GM12878 (cell line): ENCODE measurements at regions of chr15 and their contacts with region 1.

Region 1: DNA sequence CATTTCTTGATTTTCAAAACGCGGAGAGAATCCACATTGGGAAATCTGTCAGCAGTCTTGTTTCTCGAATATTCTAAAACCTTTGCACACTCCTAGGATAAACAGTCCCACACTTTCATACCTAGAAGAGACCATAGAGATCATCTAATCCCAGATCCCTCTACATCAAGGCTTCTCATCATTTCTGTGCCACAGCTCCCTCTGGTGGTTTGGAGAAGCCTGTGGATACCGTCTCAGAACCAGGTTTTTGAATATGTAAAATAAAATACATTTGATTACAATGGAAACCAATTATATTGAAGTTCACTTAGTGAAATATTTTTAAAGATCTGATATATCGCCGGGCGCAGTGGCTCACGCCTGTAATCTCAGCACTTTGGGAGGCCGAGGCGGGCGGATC is 211.9 kb upstream of the GOLGA6L4 start:
- DNase-seq: no peak
- ATAC-seq: peak; percentile 79
- H3K4me3 ChIP-seq: no peak overlapping the region
- H3K27ac ChIP-seq: no peak overlapping the region
- H3K4me1 ChIP-seq: no peaks in the 10 kb centered on the region
- H3K27me3 ChIP-seq: no peaks in the 10 kb centered on the region
- CTCF ChIP-seq: peak; percentile 59 to 62 (median 60)
- EP300 ChIP-seq: no peak
- POLR2A ChIP-seq: no peak
- RAD21 ChIP-seq: peak; percentile 77

Region 2: DNA sequence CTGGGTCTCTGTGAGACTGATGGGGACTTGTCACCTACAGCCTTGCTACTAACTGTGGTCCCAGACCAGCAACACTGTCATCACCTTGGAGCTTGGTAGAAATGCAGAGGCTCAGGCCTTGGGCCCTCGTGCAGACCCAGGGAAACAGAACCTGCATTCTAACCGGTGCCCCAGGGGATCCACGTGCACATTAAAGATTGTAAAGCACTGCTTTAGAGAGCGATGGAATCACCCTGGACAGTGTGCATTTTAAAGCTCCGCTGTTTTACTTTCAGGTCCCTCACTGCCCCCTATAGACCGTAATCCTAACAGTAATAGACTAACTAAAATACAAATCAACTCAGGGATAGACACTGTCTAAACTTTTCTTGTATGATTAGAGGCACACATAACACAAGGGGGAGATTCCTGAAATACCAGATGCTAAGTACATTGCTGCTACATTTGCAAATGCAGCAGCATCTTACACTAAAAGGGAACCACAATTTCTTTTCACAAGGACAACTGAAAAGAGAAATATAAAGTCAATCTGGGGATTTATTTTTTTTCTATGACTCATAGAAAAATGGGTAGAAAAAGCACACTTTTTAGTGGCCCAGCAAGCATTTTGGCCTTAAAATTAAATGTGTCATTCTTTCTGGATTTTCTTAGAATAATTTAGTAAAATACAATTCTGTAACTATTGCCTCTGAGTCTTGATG is 587.0 kb before region 1 on chr15:
- CTCF ChIA-PET with region 1: interaction called, 4 read pairs
- POLR2A ChIA-PET with region 1: no interaction called
- RAD21 ChIA-PET with region 1: no interaction called
- SMC1A ChIA-PET with region 1: no interaction called
- in situ Hi-C with region 1: loop called (anchors 10 kb)
- intact Hi-C with region 1: no loop called
- DNase-seq: no peak
- ATAC-seq: peak; percentile 70
- H3K4me3 ChIP-seq: no peak overlapping the region
- H3K27ac ChIP-seq: no peak overlapping the region
- H3K4me1 ChIP-seq: no peaks in the 10 kb centered on the region
- H3K27me3 ChIP-seq: peaks cover 0 to 2% of the 10 kb centered on the region in 2 experiments; a peak in 1 of 4 replicates
- CTCF ChIP-seq: peak in 2 of 3 experiments; percentile 16 to 32; a peak in 1 of 6 replicates
- EP300 ChIP-seq: no peak
- POLR2A ChIP-seq: no peak
- RAD21 ChIP-seq: no peak

Region 3: DNA sequence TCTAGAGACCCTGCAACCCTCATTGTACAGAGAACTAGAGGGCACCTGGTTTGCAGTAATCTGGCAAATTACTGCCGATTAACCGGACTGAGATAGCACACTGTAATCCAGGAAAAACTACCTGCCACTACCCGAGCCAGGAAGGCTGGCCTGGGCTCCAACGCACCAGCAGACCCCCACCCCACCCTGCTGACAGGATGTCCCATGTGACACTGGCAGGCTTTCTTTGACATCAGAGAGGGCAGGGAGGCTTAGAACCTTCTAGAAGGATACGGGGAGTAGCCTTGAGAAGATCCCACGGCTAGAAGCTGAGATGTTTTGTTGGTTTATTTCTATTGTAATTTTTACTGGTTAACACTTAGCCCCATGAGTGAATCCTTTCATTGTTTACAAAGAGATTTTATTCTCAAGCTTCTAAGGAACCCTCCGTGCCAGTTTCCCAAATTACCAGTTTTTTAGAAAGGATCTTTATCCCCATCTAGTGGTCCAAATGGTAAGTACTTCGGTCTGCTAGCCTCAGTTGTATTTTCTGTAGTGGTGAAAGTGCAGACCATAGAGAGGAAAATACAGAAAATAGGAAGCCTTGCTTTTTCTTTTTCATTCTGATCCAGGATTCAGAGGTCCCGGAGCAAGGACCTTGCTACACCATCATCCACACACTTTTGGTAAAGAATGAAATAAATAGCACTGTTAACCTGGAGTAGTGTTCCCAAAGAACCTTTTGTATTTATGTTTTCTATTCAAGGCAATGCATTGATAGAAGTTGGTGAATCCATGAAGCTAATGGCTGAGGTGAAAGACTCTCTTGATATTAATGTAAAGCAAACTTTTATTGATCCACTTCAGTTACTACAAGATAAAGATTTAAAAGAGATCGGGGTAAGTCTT is 451.6 kb before region 1 on chr15:
- CTCF ChIA-PET with region 1: interaction called, 5 read pairs
- POLR2A ChIA-PET with region 1: no interaction called
- RAD21 ChIA-PET with region 1: no interaction called
- SMC1A ChIA-PET with region 1: no interaction called
- in situ Hi-C with region 1: no loop called
- intact Hi-C with region 1: loop called (anchors 5 kb)
- DNase-seq: no peak
- ATAC-seq: 0 out of 3 replicates have a peak, but pooled peaks have one; percentile 29
- H3K4me3 ChIP-seq: no peak overlapping the region
- H3K27ac ChIP-seq: no peak overlapping the region
- H3K4me1 ChIP-seq: no peaks in the 10 kb centered on the region; the same call in 1 of the 2 replicates
- H3K27me3 ChIP-seq: no peaks in the 10 kb centered on the region; a peak in 1 of 4 replicates
- CTCF ChIP-seq: peak; percentile 40 to 62 (median 50); a peak in 4 of 6 replicates
- EP300 ChIP-seq: no peak
- POLR2A ChIP-seq: no peak
- RAD21 ChIP-seq: peak; percentile 48

Region 4: GRCh38 chr15:83657549-83657948 is 366.1 kb before region 1 on chr15:
- CTCF ChIA-PET with region 1: interaction called, 10 read pairs
- POLR2A ChIA-PET with region 1: no interaction called
- RAD21 ChIA-PET with region 1: no interaction called
- SMC1A ChIA-PET with region 1: interaction called, 4 read pairs
- in situ Hi-C with region 1: no loop called
- intact Hi-C with region 1: no loop called
- DNase-seq: no peak
- ATAC-seq: no peak
- H3K4me3 ChIP-seq: no peak overlapping the region
- H3K27ac ChIP-seq: no peak overlapping the region
- H3K4me1 ChIP-seq: no peaks in the 10 kb centered on the region
- H3K27me3 ChIP-seq: peaks cover 6 to 7% of the 10 kb centered on the region in 2 experiments; a peak in 3 of 4 replicates
- CTCF ChIP-seq: peak in 2 of 3 experiments; percentile 8 to 38; a peak in 2 of 6 replicates
- EP300 ChIP-seq: no peak
- POLR2A ChIP-seq: no peak
- RAD21 ChIP-seq: 0 out of 2 replicates have a peak, but pooled peaks have one; percentile 30

Region 5: DNA sequence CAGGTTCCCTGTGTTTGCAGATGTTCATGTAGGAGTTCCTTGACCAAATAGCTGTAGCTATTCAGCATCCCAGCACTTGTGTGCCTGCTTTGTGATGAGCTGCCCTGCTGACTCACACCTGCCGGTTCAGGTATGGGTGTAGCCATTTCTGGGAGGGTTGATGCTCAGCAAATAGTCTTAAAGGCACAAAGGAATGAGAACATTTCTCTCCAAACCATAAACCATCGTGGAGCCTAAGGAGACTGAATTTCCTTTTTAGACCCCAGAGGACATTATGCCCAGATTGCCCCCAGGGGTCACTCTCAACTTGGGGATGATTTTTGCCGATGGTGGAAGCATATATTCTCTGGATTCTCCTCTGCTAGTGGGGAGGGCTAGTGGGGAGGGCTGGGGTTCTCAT is 289.1 kb before region 1 on chr15:
- CTCF ChIA-PET with region 1: interaction called, 7 read pairs
- POLR2A ChIA-PET with region 1: no interaction called
- RAD21 ChIA-PET with region 1: interaction called, 3 read pairs
- SMC1A ChIA-PET with region 1: interaction called, 18 read pairs
- in situ Hi-C with region 1: loop called (anchors 5 kb)
- intact Hi-C with region 1: loop called (anchors 2 kb)
- DNase-seq: no peak
- ATAC-seq: peak; percentile 56; the same call in 2 of the 3 replicates
- H3K4me3 ChIP-seq: no peak overlapping the region
- H3K27ac ChIP-seq: no peak overlapping the region
- H3K4me1 ChIP-seq: no peaks in the 10 kb centered on the region
- H3K27me3 ChIP-seq: no peaks in the 10 kb centered on the region
- CTCF ChIP-seq: peak; percentile 34 to 53 (median 49); a peak in 5 of 6 replicates
- EP300 ChIP-seq: no peak
- POLR2A ChIP-seq: no peak
- RAD21 ChIP-seq: peak; percentile 94

Region 6: DNA sequence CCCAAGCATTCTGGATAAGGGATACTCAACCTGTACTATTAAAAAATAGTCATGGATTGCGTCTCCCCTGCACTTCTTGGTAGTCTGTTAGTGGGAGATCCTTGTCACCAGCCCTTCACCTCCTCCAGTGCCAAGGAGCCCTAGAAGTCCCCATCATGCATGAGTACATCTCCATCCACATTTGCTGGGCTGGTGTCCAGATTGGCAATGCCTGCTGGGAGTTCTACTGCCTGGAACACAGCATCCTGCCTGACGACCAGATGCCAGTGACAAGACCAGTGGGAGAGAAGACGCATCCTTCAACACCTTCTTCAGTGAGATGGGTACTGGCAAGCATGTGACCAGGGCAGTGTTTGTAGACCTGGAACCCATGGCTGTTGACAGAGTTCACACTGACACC is 284.0 kb before region 1 on chr15:
- CTCF ChIA-PET with region 1: interaction called, 7 read pairs
- POLR2A ChIA-PET with region 1: no interaction called
- RAD21 ChIA-PET with region 1: interaction called, 3 read pairs
- SMC1A ChIA-PET with region 1: interaction called, 18 read pairs
- in situ Hi-C with region 1: loop called (anchors 5 kb)
- intact Hi-C with region 1: loop called (anchors 2 kb)
- DNase-seq: no peak
- ATAC-seq: no peak
- H3K4me3 ChIP-seq: no peak overlapping the region
- H3K27ac ChIP-seq: no peak overlapping the region
- H3K4me1 ChIP-seq: no peaks in the 10 kb centered on the region
- H3K27me3 ChIP-seq: no peaks in the 10 kb centered on the region
- CTCF ChIP-seq: no peak
- EP300 ChIP-seq: no peak
- POLR2A ChIP-seq: no peak
- RAD21 ChIP-seq: no peak

Region 7: GRCh38 chr15:84035399-84035766 is 11.7 kb after region 1 on chr15:
- CTCF ChIA-PET with region 1: interaction called, 10 read pairs
- POLR2A ChIA-PET with region 1: no interaction called
- RAD21 ChIA-PET with region 1: no interaction called
- SMC1A ChIA-PET with region 1: no interaction called
- in situ Hi-C with region 1: no loop called
- intact Hi-C with region 1: no loop called
- DNase-seq: no peak
- ATAC-seq: peak; percentile 93
- H3K4me3 ChIP-seq: no peak overlapping the region
- H3K27ac ChIP-seq: no peak overlapping the region
- H3K4me1 ChIP-seq: no peaks in the 10 kb centered on the region
- H3K27me3 ChIP-seq: no peaks in the 10 kb centered on the region
- CTCF ChIP-seq: peak; percentile 52 to 64 (median 64); a peak in 5 of 6 replicates
- EP300 ChIP-seq: no peak
- POLR2A ChIP-seq: no peak
- RAD21 ChIP-seq: peak; percentile 78